Dorsolateral prefrontal cortex (tissue), 120 donors: ENCODE measurements at regions of chrX and their contacts with region 1.

Region 1: DNA sequence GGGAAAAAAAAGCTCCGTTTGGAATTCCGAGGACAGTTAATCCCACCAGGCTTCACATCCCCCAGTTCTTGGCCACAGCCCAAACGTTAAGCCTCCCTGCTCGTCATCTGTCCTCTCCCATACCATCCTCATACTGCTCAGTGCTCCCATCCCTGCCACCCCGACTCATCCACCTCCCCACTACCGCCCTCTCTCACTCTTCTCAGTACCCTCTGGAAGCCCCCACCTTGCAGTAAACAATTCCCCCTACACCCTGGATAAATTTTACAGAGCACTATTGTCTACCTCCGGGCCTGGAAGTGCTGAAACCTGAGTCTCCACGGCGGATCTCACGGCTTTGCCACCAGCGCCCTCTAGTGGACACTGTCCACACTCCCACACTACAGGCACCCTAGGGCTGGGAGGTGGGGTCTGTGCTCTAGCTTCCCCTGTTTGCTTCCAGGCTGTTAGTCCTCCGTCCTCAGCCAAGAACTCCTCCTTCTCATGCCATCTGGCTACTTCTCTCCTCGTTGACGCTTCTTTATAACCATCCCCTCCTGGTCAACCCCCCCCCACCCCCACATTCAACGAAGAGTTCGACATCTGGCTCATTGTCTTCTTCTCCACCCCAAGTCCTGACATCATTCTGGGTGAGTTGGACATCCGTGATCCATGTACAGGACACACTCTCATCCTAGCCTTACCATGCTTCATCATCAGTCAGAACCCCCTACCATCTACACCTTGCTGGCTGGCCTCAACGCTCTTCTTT is 54.5 kb downstream of the RTL9 start:
- DNase-seq: peak in 9 of 10 donors; percentile 47 to 70 (median 61)
- H3K4me3 ChIP-seq: peak overlapping the region in 14 of 59 donors; percentile 6 to 40 (median 22)
- H3K27ac ChIP-seq: peak overlapping the region in 1 of 59 donors; percentile 58
- H3K27me3 ChIP-seq: peaks cover 0 to 82% (median 22%) of the 10 kb centered on the region in 45 donors
- CTCF ChIP-seq: peak; percentile 29 to 89 (median 78)

Region 2: GRCh38 chrX:110002300-110003166 is 410.6 kb before region 1 on chrX and contains the start of gene TMEM164:
- intact Hi-C with region 1: loop called in 1 of 2 experiments (anchors 10 kb)
- DNase-seq: peak; percentile 42 to 80 (median 70)
- H3K4me3 ChIP-seq: peak within 1 kb of the TSS; percentile 45 to 78 (median 64)
- H3K27ac ChIP-seq: peak within 1 kb of the TSS in 50 of 59 donors; percentile 22 to 86 (median 64)
- H3K27me3 ChIP-seq: peaks cover 0 to 56% (median 11%) of the 10 kb centered on the region in 45 donors
- CTCF ChIP-seq: peak in 5 of 56 donors; percentile 9 to 26 (median 11)
- total RNA-seq, gene TMEM164: 12.7 to 60.9 (median 23.9) TPM

Region 3: GRCh38 chrX:110163488-110163887 is 249.7 kb before region 1 on chrX:
- intact Hi-C with region 1: loop called (anchors 2 to 5 kb)
- DNase-seq: no peak
- H3K4me3 ChIP-seq: no peak overlapping the region
- H3K27ac ChIP-seq: no peak overlapping the region
- H3K27me3 ChIP-seq: peaks cover 0 to 59% (median 8%) of the 10 kb centered on the region in 45 donors
- CTCF ChIP-seq: no peak